H1 (cell line): ENCODE measurements at regions of chr12 and their contacts with region 1.

Region 1: GRCh38 chr12:54279866-54280467 is at the start of gene CBX5:
- DNase-seq: peak; percentile 96 to 98
- H3K4me3 ChIP-seq: peak within 1 kb of the TSS; percentile 83 to 99 (median 96)
- H3K27ac ChIP-seq: peak within 1 kb of the TSS; percentile 99
- H3K4me1 ChIP-seq: peaks cover 0 to 12% (median 8%) of the 10 kb centered on the region in 4 experiments; a peak in 5 of 7 replicates
- H3K27me3 ChIP-seq: no peaks in the 10 kb centered on the region
- CTCF ChIP-seq: no peak
- EP300 ChIP-seq: 0 out of 3 replicates have a peak, but pooled peaks of 1 of the 2 experiments have one; percentile 26
- POLR2A ChIP-seq: peak; percentile 50 to 67; a peak in 2 of 3 replicates
- RAD21 ChIP-seq: no peak; a peak in 1 of 4 replicates
- total RNA-seq, gene CBX5: 217 and 231 TPM in 2 replicates

Region 2: GRCh38 chr12:54229624-54230212 is 50.2 kb before region 1 on chr12:
- CTCF ChIA-PET with region 1: interaction called, 3 read pairs
- POLR2A ChIA-PET with region 1: interaction called, 53 read pairs
- DNase-seq: no peak
- H3K4me3 ChIP-seq: no peak overlapping the region
- H3K27ac ChIP-seq: 0 out of 2 replicates have a peak overlapping the region, but pooled peaks have one; percentile 0
- H3K4me1 ChIP-seq: no peaks in the 10 kb centered on the region
- H3K27me3 ChIP-seq: no peaks in the 10 kb centered on the region
- CTCF ChIP-seq: no peak
- EP300 ChIP-seq: no peak
- POLR2A ChIP-seq: no peak
- RAD21 ChIP-seq: no peak

Region 3: GRCh38 chr12:54259194-54260011 is 20.6 kb before region 1 on chr12:
- CTCF ChIA-PET with region 1: interaction called, 90 read pairs
- POLR2A ChIA-PET with region 1: interaction called, 1,006 read pairs
- DNase-seq: peak; percentile 89
- H3K4me3 ChIP-seq: peak overlapping the region; percentile 35 to 56 (median 46)
- H3K27ac ChIP-seq: peak overlapping the region; percentile 97
- H3K4me1 ChIP-seq: peaks cover 3 to 23% (median 15%) of the 10 kb centered on the region in 4 experiments
- H3K27me3 ChIP-seq: no peaks in the 10 kb centered on the region
- CTCF ChIP-seq: no peak
- EP300 ChIP-seq: peak; percentile 59 to 84; a peak in 2 of 3 replicates
- POLR2A ChIP-seq: peak; percentile 84 to 85
- RAD21 ChIP-seq: 0 out of 4 replicates have a peak, but pooled peaks of 1 of the 2 experiments have one; percentile 10

Region 4: DNA sequence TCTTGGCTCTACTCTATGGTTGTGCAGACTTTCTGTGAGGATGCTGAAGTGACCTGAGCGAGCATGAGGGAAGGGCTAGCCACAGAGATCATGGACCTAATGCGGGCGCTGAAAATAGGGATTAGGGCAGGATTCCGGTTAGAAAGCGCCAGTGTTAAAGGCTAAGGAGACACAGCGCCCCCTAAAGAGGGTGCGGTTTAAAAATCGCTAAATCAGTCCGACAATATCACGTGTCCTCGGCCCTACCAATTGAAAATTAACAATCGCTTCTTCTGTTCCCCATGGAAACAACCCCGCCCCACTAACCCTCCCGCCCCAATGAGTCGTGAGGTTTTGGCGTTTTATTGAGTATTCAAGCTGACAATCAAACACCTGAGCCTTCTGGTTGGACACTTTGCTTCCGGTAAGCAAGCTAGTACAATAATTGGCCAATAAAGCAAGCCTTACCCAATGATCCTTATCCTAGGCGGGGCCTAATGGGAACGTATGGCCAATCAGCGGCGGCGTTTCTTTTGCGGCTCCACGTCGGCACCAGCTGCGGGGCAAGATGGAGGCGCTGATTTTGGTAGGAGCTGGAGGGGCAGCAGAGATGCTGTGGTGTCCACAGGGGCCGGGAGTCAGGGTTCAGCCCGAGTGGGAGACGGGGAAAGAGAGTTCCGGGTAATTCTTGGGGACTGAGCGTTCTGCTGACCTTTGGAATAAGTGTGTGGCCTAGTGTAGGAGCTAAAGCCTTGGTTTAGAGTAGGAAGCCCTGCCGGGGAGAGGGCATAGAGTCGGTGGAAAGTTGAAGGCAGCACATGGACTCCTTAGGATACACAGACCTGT is 44.9 kb after region 1 on chr12 and contains the start of gene COPZ1:
- CTCF ChIA-PET with region 1: interaction called, 4 read pairs
- POLR2A ChIA-PET with region 1: interaction called, 166 read pairs
- DNase-seq: peak; percentile 87 to 97
- H3K4me3 ChIP-seq: peak within 1 kb of the TSS; percentile 79 to 97 (median 88)
- H3K27ac ChIP-seq: peak within 1 kb of the TSS; percentile 83
- H3K4me1 ChIP-seq: peaks cover 0 to 10% (median 4%) of the 10 kb centered on the region in 4 experiments; a peak in 2 of 7 replicates
- H3K27me3 ChIP-seq: no peaks in the 10 kb centered on the region
- CTCF ChIP-seq: peak; percentile 57 to 89 (median 81)
- EP300 ChIP-seq: no peak
- POLR2A ChIP-seq: peak; percentile 54 to 87
- RAD21 ChIP-seq: peak; percentile 80 to 82
- total RNA-seq, gene COPZ1: 94.2 and 103 TPM in 2 replicates

Region 5: GRCh38 chr12:54359033-54359761 is 79.2 kb after region 1 on chr12:
- CTCF ChIA-PET with region 1: interaction called, 9 read pairs
- POLR2A ChIA-PET with region 1: interaction called, 133 read pairs
- DNase-seq: peak; percentile 89 to 98
- H3K4me3 ChIP-seq: peak overlapping the region; percentile 57 to 78 (median 74)
- H3K27ac ChIP-seq: peak overlapping the region; percentile 35; the same call in 1 of the 2 replicates
- H3K4me1 ChIP-seq: peaks cover 16 to 38% (median 20%) of the 10 kb centered on the region in 4 experiments
- H3K27me3 ChIP-seq: no peaks in the 10 kb centered on the region; a peak in 1 of 7 replicates
- CTCF ChIP-seq: no peak
- EP300 ChIP-seq: no peak; a peak in 1 of 3 replicates
- POLR2A ChIP-seq: 0 out of 3 replicates have a peak, but pooled peaks of 1 of the 2 experiments have one; percentile 8
- RAD21 ChIP-seq: no peak

Region 6: DNA sequence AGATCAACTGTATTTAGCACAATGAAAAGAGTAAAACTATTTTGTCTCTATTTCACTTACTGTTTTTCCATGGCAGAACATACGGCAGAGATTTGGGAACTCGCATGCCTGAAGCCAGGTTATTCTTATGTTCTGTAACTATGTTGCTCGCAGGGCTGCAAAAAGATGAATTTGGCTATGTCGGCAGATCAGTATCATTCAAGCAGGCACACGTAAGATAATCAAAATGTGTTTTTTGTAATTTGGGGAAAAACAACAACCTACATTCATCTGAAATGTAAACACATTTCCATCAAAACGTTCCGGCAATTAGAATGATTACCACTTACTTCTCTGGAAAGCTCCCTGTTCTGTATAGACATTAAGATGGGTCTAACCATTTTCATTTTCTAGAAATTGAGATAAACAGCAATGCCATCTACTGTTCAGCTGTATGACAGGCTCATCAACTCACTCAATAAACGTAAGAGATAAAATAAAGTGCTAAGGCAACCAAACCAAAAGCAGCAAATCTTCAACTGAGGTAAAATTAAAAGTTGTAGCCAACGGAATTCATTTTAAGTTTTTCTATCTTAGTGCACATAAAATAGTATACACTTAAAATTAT is 180.5 kb after region 1 on chr12:
- CTCF ChIA-PET with region 1: no interaction called
- POLR2A ChIA-PET with region 1: no interaction called
- DNase-seq: no peak
- H3K4me3 ChIP-seq: no peak overlapping the region
- H3K27ac ChIP-seq: no peak overlapping the region
- H3K4me1 ChIP-seq: no peaks in the 10 kb centered on the region
- H3K27me3 ChIP-seq: peaks cover 4 to 39% (median 21%) of the 10 kb centered on the region in 4 experiments
- CTCF ChIP-seq: no peak
- EP300 ChIP-seq: no peak
- POLR2A ChIP-seq: no peak
- RAD21 ChIP-seq: no peak